Activated CD4-positive, alpha-beta T cell treated with anti-CD3 and anti-CD28 coated beads for 36 hours (primary cell): ENCODE measurements at regions of chr18 and their contacts with region 1.

Region 1: GRCh38 chr18:50819728-50820378 is at the start of gene MRO:
- DNase-seq: peak; percentile 88
- ATAC-seq: peak; percentile 100
- H3K4me3 Mint-ChIP-seq: no peak within 1 kb of the TSS
- H3K27ac Mint-ChIP-seq: no peak within 1 kb of the TSS
- H3K4me1 Mint-ChIP-seq: no peaks in the 10 kb centered on the region
- H3K27me3 Mint-ChIP-seq: peaks cover 14% of the 10 kb centered on the region
- total RNA-seq, gene MRO: not detected

Region 2: DNA sequence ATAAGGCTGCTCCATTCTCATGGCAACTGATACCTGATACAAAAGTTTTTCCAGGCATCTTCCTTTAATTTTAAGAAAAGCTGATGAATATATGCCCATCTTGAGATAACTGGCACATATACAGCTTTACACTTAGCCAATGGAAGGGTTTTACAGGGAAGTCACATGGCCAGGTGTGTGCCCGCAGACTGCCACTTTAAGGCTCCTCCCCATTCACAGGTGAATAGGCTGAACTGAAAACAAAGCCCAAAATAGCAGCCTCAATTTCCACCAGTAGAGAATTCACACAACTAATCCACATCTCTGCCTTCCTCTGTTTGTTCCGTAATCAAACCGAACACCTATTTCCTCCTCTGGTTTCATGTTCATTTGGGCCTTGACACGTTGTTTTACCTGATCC is 49.3 kb after region 1 on chr18:
- CTCF ChIA-PET with region 1: interaction called, 5 read pairs
- POLR2A ChIA-PET with region 1: no interaction called
- intact Hi-C with region 1: loop called in 1 of 2 experiments (anchors 2 kb)
- DNase-seq: no peak
- ATAC-seq: no peak
- H3K4me3 Mint-ChIP-seq: no peak overlapping the region
- H3K27ac Mint-ChIP-seq: no peak overlapping the region
- H3K4me1 Mint-ChIP-seq: no peaks in the 10 kb centered on the region
- H3K27me3 Mint-ChIP-seq: peaks cover 3% of the 10 kb centered on the region

Region 3: DNA sequence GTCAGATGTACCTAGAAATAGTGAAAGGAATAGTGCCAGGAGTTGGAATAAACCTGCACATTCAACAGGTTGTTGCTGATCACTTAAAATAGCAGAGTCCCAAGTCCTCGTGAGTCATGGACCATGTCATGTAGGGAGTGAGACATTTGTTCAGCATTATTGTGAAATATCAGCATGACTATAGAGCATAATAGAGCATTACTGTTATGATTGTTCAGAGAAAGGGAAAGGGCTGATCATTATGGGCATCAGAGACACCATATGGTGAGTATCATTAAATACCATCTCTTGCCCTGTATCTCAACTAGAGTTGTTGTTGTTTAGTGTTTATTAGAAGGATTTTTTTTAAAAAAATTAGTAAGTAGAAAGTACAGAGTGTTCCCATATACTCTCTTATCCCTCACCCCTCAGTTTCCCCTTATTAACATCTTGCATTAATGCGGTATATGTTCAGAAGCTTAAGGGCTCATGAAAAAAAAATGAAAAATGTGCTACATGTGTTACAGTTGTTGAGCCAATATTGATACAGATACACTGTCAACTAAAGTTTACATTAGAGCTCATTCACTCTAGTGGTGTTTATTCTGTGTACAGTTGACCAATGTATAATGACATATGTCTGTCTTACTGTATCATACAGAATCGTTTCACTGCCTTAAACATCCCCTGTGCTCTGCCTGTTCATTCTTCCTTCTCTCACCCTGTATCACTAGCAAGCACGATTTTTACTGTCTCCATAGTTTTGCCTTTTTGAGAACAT is 153.7 kb after region 1 on chr18:
- CTCF ChIA-PET with region 1: interaction called, 4 read pairs
- POLR2A ChIA-PET with region 1: no interaction called
- intact Hi-C with region 1: loop called in 1 of 2 experiments (anchors 2 kb)
- DNase-seq: peak; percentile 30
- ATAC-seq: peak; percentile 95
- H3K4me3 Mint-ChIP-seq: no peak overlapping the region
- H3K27ac Mint-ChIP-seq: peak overlapping the region; percentile 65
- H3K4me1 Mint-ChIP-seq: peaks cover 36% of the 10 kb centered on the region
- H3K27me3 Mint-ChIP-seq: no peaks in the 10 kb centered on the region

Region 4: DNA sequence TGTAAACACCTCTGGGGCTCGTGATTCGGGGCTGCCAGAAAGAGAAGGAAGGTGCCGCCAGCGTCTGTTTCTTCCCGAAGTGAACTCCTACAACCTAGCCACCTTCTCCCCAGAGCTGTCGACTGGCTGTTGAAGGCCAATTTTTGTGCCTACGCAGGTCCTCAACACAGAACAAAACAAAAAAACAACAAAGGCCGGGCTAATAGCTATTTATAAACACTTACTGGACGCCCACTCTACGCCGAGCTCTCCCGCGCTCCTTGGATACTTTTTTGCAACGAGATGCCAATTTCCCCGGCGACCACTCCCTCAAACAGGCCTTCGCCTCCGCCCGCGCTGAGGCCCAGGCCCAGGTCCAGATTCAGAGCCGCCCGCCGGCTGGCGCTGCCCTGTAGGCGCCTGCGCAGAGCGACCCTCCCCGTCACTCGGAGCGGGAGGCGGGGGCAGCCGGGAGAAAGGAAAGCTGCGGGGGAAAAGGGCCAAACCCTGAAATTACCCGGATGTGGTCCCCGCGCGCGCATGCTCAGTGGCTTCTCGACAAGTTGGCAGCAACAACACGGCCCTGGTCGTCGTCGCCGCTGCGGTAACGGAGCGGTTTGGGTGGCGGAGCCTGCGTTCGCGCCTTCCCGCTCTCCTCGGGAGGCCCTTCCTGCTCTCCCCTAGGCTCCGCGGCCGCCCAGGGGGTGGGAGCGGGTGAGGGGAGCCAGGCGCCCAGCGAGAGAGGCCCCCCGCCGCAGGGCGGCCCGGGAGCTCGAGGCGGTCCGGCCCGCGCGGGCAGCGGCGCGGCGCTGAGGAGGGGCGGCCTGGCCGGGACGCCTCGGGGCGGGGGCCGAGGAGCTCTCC is 210.1 kb after region 1 on chr18 and contains the start of gene SMAD4:
- CTCF ChIA-PET with region 1: interaction called, 10 read pairs
- POLR2A ChIA-PET with region 1: no interaction called
- intact Hi-C with region 1: no loop called
- DNase-seq: peak; percentile 99
- ATAC-seq: peak; percentile 84
- H3K4me3 Mint-ChIP-seq: peak within 1 kb of the TSS; percentile 85
- H3K27ac Mint-ChIP-seq: peak within 1 kb of the TSS; percentile 94
- H3K4me1 Mint-ChIP-seq: peaks cover 55% of the 10 kb centered on the region
- H3K27me3 Mint-ChIP-seq: no peaks in the 10 kb centered on the region
- total RNA-seq, gene SMAD4: 79.3 to 89.5 TPM